GM12878 (cell line): ENCODE measurements at regions of chr15 and their contacts with region 1.

Region 1: GRCh38 chr15:68875377-68876116 is 54.8 kb upstream of the SPESP1 start:
- DNase-seq: peak; percentile 33
- ATAC-seq: peak; percentile 92
- H3K4me3 ChIP-seq: no peak overlapping the region
- H3K27ac ChIP-seq: no peak overlapping the region
- H3K4me1 ChIP-seq: no peaks in the 10 kb centered on the region
- H3K27me3 ChIP-seq: no peaks in the 10 kb centered on the region
- CTCF ChIP-seq: peak; percentile 81 to 96 (median 82); a peak in 4 of 6 replicates
- EP300 ChIP-seq: no peak
- POLR2A ChIP-seq: no peak
- RAD21 ChIP-seq: peak; percentile 96

Region 2: GRCh38 chr15:68550481-68551295 is 324.9 kb before region 1 on chr15:
- CTCF ChIA-PET with region 1: interaction called, 52 read pairs
- POLR2A ChIA-PET with region 1: no interaction called
- RAD21 ChIA-PET with region 1: interaction called, 21 read pairs
- SMC1A ChIA-PET with region 1: interaction called, 18 read pairs
- in situ Hi-C with region 1: loop called (anchors 5 kb)
- intact Hi-C with region 1: loop called (anchors 2 kb)
- DNase-seq: no peak
- ATAC-seq: peak; percentile 59
- H3K4me3 ChIP-seq: no peak overlapping the region
- H3K27ac ChIP-seq: no peak overlapping the region
- H3K4me1 ChIP-seq: no peaks in the 10 kb centered on the region
- H3K27me3 ChIP-seq: no peaks in the 10 kb centered on the region
- CTCF ChIP-seq: peak; percentile 83 to 88 (median 88)
- EP300 ChIP-seq: no peak
- POLR2A ChIP-seq: no peak
- RAD21 ChIP-seq: peak; percentile 68

Region 3: DNA sequence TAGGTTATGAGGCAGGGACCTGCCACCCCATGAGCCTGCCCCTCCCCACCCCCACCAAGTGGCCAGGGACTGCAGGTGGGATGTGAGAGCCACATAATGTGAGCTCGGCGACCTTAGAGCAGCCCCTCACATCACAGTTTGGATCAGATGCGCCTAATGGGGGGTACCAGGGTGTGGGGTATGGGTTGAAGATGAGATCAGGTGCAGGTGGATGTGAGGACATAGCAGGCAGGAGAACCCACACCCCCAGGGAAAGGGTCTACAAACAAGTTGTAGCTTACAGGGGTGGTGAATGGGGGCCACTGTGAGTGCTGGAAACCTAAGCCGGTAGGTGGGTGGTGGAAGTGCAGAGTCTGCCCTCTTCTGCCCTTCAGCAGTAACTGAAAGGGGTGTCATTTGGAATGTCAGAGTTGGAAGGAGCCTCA is 202.8 kb before region 1 on chr15:
- CTCF ChIA-PET with region 1: interaction called, 38 read pairs
- POLR2A ChIA-PET with region 1: no interaction called
- RAD21 ChIA-PET with region 1: interaction called, 17 read pairs
- SMC1A ChIA-PET with region 1: interaction called, 22 read pairs
- in situ Hi-C with region 1: no loop called
- intact Hi-C with region 1: loop called (anchors 5 kb)
- DNase-seq: no peak
- ATAC-seq: no peak
- H3K4me3 ChIP-seq: no peak overlapping the region
- H3K27ac ChIP-seq: no peak overlapping the region
- H3K4me1 ChIP-seq: peaks cover 6% of the 10 kb centered on the region
- H3K27me3 ChIP-seq: no peaks in the 10 kb centered on the region; a peak in 1 of 4 replicates
- CTCF ChIP-seq: no peak; a peak in 1 of 6 replicates
- EP300 ChIP-seq: no peak
- POLR2A ChIP-seq: no peak
- RAD21 ChIP-seq: no peak

Region 4: DNA sequence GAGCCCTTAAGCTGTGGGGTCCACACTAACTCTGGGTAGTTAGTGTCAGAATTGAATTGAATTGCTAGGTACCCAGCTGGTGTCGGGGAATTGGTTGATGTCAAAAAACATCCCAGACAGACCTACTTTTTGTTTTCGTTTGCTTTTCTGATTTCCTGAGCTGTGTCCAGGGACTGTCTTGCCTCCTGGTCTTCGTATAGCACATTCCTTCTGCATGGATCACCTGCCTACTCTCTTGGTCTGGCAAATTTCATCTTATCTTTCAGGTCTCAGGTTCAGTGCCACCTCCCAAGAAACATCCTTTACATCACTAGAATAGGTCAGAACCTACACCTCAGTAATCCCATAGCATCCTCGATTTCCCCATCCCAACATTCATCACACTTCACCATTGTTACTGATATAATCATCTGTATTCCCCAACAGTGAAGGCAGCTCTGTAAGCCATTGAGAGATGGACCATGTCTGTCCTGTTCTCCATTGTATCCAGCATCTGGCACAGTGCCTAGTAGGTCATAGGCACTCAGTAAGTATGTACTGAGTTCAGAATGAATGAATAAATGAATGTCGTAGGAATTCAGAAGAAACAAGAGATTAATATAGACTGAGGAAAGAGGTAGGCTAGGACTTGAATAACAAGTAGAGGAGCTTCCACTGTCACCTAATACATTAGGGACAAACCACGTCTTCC is 136.0 kb before region 1 on chr15:
- CTCF ChIA-PET with region 1: interaction called, 12 read pairs
- POLR2A ChIA-PET with region 1: no interaction called
- RAD21 ChIA-PET with region 1: interaction called, 3 read pairs
- SMC1A ChIA-PET with region 1: interaction called, 14 read pairs
- in situ Hi-C with region 1: loop called (anchors 5 kb)
- intact Hi-C with region 1: no loop called
- DNase-seq: no peak
- ATAC-seq: no peak
- H3K4me3 ChIP-seq: no peak overlapping the region
- H3K27ac ChIP-seq: no peak overlapping the region
- H3K4me1 ChIP-seq: no peaks in the 10 kb centered on the region
- H3K27me3 ChIP-seq: peaks cover 0 to under 1% of the 10 kb centered on the region in 2 experiments; a peak in 1 of 4 replicates
- CTCF ChIP-seq: no peak
- EP300 ChIP-seq: no peak
- POLR2A ChIP-seq: no peak
- RAD21 ChIP-seq: no peak

Region 5: GRCh38 chr15:68829068-68829467 is 46.5 kb before region 1 on chr15:
- CTCF ChIA-PET with region 1: interaction called, 18 read pairs
- POLR2A ChIA-PET with region 1: no interaction called
- RAD21 ChIA-PET with region 1: interaction called, 16 read pairs
- SMC1A ChIA-PET with region 1: interaction called, 8 read pairs
- in situ Hi-C with region 1: no loop called
- intact Hi-C with region 1: no loop called
- DNase-seq: no peak
- ATAC-seq: peak; percentile 97
- H3K4me3 ChIP-seq: no peak overlapping the region
- H3K27ac ChIP-seq: no peak overlapping the region
- H3K4me1 ChIP-seq: no peaks in the 10 kb centered on the region; the same call in 1 of the 2 replicates
- H3K27me3 ChIP-seq: no peaks in the 10 kb centered on the region
- CTCF ChIP-seq: peak; percentile 64 to 78 (median 72); a peak in 5 of 6 replicates
- EP300 ChIP-seq: no peak
- POLR2A ChIP-seq: no peak
- RAD21 ChIP-seq: peak; percentile 77